Activated T-helper 2 cell treated with anti-CD3 and anti-CD28 coated beads, Interferon-gamma antibody, Interleukin-2, Interleukin-4, amounts not matched to agents 10 μg/mL and 5 μg/mL and 100 μg/mL, durations not matched to agents 14 hours and 24 hours and 36 hours (primary cell): ENCODE measurements at regions of chr3 and their contacts with region 1.

Region 1: DNA sequence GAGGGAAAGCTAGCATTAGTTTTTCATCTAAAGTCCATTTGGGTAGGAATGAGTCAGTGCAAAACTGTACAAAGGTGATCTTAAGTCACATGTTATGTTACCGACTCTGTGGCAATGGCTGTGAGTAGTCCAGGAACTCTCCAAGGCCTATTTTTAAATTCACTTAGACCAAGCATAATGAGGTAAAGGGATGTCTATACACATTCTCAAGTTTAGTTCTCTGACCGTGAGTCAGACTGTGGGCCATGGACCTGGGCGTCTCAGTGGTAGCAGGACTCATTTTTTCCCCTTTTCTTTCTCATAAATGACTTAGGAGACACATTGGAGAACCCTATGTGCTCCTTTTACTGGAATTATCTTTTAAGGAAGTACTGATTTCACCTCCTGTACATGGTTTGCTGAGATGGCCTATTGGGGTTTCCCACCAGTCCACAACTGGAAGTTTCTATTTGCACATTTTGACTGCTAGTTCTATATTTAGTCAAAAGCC is 488.7 kb upstream of the TPRG1 start:
- DNase-seq: no peak
- H3K4me3 Mint-ChIP-seq: no peak overlapping the region
- H3K27ac Mint-ChIP-seq: peak overlapping the region; percentile 78
- H3K4me1 Mint-ChIP-seq: peaks cover 41% of the 10 kb centered on the region
- H3K27me3 Mint-ChIP-seq: no peaks in the 10 kb centered on the region

Region 2: DNA sequence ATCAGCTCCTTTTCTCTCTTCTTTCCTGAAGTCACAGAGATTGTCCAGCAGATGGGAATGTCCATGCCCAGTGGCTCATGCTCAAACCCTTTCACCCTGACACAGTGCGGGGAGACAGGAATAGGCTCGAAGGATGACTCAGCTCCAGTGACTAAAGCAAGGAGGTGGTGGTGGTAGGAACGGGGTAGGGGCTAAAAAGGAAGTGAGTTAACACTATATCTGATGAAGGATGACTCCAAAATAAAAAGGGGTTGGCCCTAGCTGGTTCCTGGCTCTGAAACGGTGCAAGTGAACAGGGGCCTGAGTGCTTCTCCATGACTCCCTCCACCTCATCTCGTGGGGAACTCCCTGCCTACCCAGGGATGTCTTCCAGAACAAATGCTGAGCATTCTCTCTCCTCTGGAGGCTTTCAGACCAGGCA is 696.6 kb before region 1 on chr3:
- intact Hi-C with region 1: loop called (anchors 5 kb)
- DNase-seq: peak; percentile 35
- H3K4me3 Mint-ChIP-seq: peak overlapping the region; percentile 22
- H3K27ac Mint-ChIP-seq: peak overlapping the region; percentile 65
- H3K4me1 Mint-ChIP-seq: peaks cover 51% of the 10 kb centered on the region
- H3K27me3 Mint-ChIP-seq: no peaks in the 10 kb centered on the region

Region 3: GRCh38 chr3:188294823-188295487 is 388.1 kb before region 1 on chr3:
- intact Hi-C with region 1: loop called (anchors 1 kb)
- DNase-seq: no peak
- H3K4me3 Mint-ChIP-seq: no peak overlapping the region
- H3K27ac Mint-ChIP-seq: no peak overlapping the region
- H3K4me1 Mint-ChIP-seq: peaks cover 66% of the 10 kb centered on the region
- H3K27me3 Mint-ChIP-seq: no peaks in the 10 kb centered on the region

Region 4: DNA sequence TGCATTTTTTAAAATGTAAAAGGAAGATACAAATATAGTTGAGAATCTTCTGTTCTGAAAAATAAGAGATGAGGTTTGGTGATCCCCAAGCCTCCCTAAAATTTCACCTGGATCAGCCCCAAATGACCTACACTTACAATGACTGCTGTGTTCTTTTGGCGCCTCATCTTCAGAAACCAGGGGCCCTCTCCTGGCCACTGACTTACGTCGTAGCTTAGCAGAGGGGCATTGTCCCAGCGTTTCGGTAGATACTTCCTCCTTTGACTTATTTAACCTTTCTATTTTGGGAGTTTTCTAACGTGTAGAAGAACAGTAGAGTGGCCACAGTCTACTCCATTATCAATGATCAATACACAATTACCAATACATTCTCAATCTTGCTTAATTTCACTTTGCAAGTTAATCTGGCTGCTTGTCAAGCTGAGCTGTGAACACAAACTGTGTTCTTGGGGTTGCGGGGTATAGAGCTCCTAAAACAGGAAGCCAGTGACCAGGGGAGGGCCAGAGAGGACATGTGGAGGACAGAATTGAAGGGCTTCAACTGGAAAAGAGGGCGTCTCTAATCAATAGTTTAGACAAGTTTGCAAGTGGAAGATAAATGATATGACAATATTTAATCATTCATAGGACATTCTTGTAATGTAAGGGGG is 109.7 kb before region 1 on chr3:
- intact Hi-C with region 1: no loop called
- DNase-seq: no peak
- H3K4me3 Mint-ChIP-seq: no peak overlapping the region
- H3K27ac Mint-ChIP-seq: peak overlapping the region; percentile 3
- H3K4me1 Mint-ChIP-seq: peaks cover 5% of the 10 kb centered on the region
- H3K27me3 Mint-ChIP-seq: no peaks in the 10 kb centered on the region

Region 5: DNA sequence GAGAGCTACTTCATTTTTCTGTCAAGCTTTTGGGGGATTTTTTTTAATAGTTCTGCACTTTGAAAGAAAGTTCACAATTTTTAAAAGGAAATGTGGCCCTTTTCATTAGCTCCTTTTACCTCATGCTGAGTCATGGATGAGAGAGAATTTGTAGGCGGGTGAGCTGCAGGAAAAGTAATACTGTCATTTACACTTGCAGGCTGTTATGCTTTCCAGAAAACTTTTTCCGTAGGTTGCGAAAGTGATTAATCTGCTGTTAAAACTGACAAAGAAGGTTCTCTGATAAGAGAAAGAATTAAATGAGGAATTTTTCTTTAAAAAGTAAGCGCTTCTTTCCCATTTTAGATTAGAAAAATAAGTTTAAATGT is 98.9 kb before region 1 on chr3:
- intact Hi-C with region 1: loop called (anchors 1 kb)
- DNase-seq: no peak
- H3K4me3 Mint-ChIP-seq: peak overlapping the region; percentile 13
- H3K27ac Mint-ChIP-seq: peak overlapping the region; percentile 86
- H3K4me1 Mint-ChIP-seq: peaks cover 30% of the 10 kb centered on the region
- H3K27me3 Mint-ChIP-seq: no peaks in the 10 kb centered on the region

Region 6: DNA sequence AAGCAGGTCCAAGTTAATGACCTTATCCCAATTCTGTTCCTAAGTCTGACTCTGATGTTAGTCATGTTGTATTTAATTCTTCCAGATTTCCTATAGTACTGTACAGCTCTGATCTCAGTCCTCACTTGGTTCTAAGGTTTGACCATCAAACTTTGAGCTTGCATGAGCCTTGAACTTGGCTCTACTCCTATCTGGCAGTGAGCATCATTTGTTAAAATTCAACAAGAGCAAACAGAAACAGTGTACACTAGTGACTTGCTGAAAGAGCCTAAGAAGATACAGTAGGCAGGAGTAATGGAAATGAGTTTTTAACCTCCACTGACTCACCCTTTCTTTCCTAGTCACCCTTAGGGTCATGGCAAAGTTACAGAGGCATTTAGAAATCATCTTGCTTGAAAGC is 37.6 kb after region 1 on chr3:
- intact Hi-C with region 1: loop called (anchors 5 kb)
- DNase-seq: no peak
- H3K4me3 Mint-ChIP-seq: no peak overlapping the region
- H3K27ac Mint-ChIP-seq: no peak overlapping the region
- H3K4me1 Mint-ChIP-seq: peaks cover 27% of the 10 kb centered on the region
- H3K27me3 Mint-ChIP-seq: no peaks in the 10 kb centered on the region

Region 7: DNA sequence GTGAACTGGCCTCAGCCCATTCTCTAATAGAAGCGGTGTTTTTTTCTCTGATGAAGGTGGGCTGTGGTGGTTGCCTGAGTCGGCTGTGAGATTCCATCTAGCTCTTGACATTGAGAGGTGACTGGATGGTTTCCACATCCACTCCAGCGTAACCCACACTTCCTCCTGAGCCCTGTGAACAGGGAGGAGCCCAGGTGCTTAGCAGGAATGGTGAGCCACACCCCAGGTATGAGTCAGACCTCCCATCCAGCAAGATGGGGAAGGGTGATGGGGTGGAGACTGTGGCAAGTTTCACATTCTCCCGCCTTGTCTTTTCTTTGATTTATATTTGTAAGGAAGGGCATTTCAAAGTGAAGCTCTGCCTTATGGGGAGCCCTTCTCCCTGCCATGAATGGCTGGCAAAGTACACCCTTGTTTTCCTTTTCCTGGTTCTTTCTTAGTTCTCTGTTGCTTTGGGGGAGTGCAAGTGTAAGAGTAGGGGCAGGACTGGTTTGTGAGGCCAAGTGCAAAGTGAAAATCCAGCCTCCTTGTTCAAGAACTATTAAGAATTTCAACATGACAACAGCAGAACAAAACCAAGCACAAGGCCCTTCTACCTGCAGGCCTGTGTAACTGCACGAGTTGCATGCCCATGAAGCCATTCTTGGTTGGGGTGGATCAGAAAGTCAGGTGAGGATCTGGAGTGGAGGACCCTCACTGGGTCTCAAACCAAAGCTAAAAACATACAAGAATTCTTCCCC is 484.1 kb after region 1 on chr3:
- intact Hi-C with region 1: no loop called
- DNase-seq: no peak
- H3K4me3 Mint-ChIP-seq: no peak overlapping the region
- H3K27ac Mint-ChIP-seq: no peak overlapping the region
- H3K4me1 Mint-ChIP-seq: peaks cover 3% of the 10 kb centered on the region
- H3K27me3 Mint-ChIP-seq: peaks cover 3% of the 10 kb centered on the region